Activated CD8-positive, alpha-beta memory T cell treated with anti-CD3 and anti-CD28 coated beads, Interleukin-2, amount 10 ng/mL, durations not matched to agents 7 days and 5 days (primary cell): ENCODE measurements at regions of chr1 and their contacts with region 1.

Region 1: GRCh38 chr1:230104395-230105244 is 37.6 kb downstream of the GALNT2 start:
- DNase-seq: peak; percentile 85
- ATAC-seq: peak; percentile 85
- H3K4me3 Mint-ChIP-seq: no peak overlapping the region
- H3K27ac Mint-ChIP-seq: peak overlapping the region; percentile 64
- H3K4me1 Mint-ChIP-seq: peaks cover 71% of the 10 kb centered on the region
- H3K27me3 Mint-ChIP-seq: no peaks in the 10 kb centered on the region

Region 2: GRCh38 chr1:230153641-230154296 is 49.1 kb after region 1 on chr1:
- CTCF ChIA-PET with region 1: no interaction called
- DNase-seq: no peak
- ATAC-seq: no peak
- H3K4me3 Mint-ChIP-seq: no peak overlapping the region
- H3K27ac Mint-ChIP-seq: no peak overlapping the region
- H3K4me1 Mint-ChIP-seq: peaks cover 22% of the 10 kb centered on the region
- H3K27me3 Mint-ChIP-seq: no peaks in the 10 kb centered on the region

Region 3: DNA sequence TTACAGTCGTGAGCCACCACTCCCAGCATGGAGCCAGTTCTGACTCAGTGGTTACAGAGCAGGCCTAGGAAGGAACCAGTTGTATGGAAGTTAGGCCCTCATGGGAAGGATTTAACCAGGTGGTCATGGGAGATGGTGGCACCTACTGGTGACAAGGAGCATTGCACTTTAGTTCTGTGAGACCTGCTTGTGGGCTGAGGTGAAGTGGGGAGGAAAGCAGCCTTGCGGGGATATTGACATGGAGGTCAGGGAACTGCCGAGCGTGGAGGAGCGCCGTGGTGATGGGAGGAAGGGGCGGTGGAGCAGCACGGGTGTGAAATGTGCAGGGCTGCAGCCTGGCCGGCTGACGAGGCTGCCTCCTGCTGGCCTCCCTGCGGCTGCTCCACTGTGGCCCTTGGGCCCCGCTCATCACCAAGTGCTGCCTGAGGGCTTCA is 62.8 kb after region 1 on chr1:
- CTCF ChIA-PET with region 1: interaction called, 11 read pairs
- DNase-seq: peak; percentile 61
- ATAC-seq: peak; percentile 82
- H3K4me3 Mint-ChIP-seq: no peak overlapping the region
- H3K27ac Mint-ChIP-seq: peak overlapping the region; percentile 1
- H3K4me1 Mint-ChIP-seq: peaks cover 30% of the 10 kb centered on the region
- H3K27me3 Mint-ChIP-seq: no peaks in the 10 kb centered on the region

Region 4: DNA sequence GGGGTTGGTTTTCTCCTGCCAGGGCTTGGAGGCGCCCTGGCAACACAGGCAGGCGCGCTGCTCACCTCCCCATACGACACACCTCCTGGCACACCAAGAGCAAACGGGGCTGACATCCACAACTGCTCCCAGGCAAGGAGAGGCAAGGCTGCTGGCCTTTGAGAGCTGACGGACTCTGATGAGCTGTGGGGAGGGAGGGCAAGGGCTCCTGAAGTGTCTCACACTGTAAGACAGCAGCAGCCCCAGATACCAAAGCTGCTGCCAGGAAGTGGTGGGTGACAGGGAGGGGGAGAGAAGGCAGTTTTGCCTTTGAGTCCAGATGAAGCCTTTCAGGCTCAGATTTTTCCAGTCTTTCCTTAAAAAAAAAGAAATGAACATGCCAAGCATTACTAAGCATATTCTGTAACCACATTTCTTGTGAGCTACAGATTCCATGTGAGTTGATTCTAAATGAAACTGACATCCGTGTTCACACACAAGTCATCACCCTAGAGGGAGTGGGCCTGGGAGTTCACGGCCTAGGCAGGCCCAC is 297.2 kb after region 1 on chr1:
- CTCF ChIA-PET with region 1: no interaction called
- DNase-seq: no peak
- ATAC-seq: no peak
- H3K4me3 Mint-ChIP-seq: no peak overlapping the region
- H3K27ac Mint-ChIP-seq: no peak overlapping the region
- H3K4me1 Mint-ChIP-seq: no peaks in the 10 kb centered on the region
- H3K27me3 Mint-ChIP-seq: no peaks in the 10 kb centered on the region